Prostate gland (tissue), 2 donors: ENCODE measurements at regions of chr5 and their contacts with region 1.

Region 1: DNA sequence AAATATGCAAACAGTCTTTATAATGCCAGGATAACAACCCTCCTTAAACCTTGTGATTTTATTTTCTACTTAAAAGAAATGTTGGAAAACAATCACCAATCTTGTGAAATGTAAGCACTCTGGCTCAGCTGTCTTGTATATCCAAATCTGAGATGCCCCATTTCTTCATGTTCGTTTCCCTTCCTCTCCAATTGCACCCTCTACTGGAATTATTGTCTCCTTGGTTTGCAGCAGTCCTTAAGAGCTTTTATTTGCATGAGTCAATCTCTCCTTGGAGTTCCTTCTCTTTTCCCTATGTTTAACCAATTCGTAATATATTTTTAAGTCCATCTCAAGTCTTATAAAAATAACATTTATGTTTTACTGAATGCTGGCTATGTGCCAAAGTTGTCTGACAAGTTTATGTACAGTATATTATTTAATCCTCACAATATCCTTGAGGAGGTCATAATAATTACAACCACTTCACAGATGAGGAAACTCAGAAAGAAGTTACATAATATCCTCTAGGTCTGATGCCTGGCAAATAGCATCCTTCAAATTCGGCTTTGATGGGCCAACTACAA is 362.0 kb upstream of the CDH10 start:
- DNase-seq: no peak
- H3K4me3 ChIP-seq: no peak overlapping the region
- H3K27ac ChIP-seq: no peak overlapping the region
- H3K4me1 ChIP-seq: no peaks in the 10 kb centered on the region
- H3K27me3 ChIP-seq: no peaks in the 10 kb centered on the region
- CTCF ChIP-seq: no peak
- POLR2A ChIP-seq: no peak

Region 2: DNA sequence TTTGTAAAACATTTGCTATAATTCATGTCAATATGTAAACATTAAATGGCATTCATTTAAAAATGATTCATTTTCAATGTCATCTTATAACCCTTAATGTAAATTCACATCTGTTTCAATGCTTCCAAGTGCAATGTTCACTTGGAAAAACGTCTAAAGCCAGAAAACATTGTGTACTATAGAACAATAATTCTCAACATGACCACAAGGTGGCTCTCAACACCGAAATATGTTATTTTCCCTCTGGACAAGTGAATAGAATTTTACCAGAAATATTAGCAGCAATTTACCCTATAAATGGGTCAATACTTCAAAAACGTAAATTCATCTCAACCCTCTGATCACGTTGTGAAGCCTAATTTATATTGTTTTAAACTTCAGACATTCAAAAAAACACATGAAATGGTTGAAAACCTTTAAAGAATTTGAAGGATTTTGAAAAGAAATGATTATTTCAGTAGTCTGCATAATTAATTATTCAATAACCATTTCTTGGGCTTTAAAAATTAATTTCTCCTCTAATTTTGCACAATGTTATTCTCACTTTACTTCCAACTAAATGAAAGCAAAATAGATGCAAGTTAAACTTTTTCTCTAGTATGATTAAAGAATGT is 373.0 kb before region 1 on chr5:
- intact Hi-C with region 1: loop called (anchors 10 kb)
- DNase-seq: no peak
- H3K4me3 ChIP-seq: no peak overlapping the region
- H3K27ac ChIP-seq: no peak overlapping the region
- H3K4me1 ChIP-seq: no peaks in the 10 kb centered on the region
- H3K27me3 ChIP-seq: no peaks in the 10 kb centered on the region
- CTCF ChIP-seq: peak in 3 of 4 experiments; percentile 51 to 62 (median 61)
- POLR2A ChIP-seq: no peak

Region 3: GRCh38 chr5:25064306-25064705 is 57.5 kb after region 1 on chr5:
- intact Hi-C with region 1: no loop called
- DNase-seq: no peak
- H3K4me3 ChIP-seq: no peak overlapping the region
- H3K27ac ChIP-seq: no peak overlapping the region
- H3K4me1 ChIP-seq: no peaks in the 10 kb centered on the region
- H3K27me3 ChIP-seq: no peaks in the 10 kb centered on the region
- CTCF ChIP-seq: no peak
- POLR2A ChIP-seq: no peak

Region 4: DNA sequence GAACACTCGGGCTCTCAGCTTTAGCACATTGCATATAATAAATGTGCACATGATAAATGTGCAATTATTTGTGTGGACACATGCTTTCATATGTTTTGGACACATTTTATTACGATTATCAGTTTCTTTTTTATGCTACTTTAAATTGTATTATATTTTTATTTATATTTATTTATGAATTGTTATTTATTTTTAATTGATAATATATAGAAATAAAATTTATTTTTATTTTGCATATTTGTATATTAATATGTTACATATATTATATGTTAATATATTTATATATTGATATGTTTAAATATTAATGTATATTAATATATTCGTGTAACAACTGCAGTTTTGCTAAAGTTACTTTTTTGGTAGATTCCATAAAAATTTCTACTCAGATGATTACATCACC is 92.7 kb after region 1 on chr5:
- intact Hi-C with region 1: no loop called
- DNase-seq: no peak
- H3K4me3 ChIP-seq: no peak overlapping the region
- H3K27ac ChIP-seq: no peak overlapping the region
- H3K4me1 ChIP-seq: no peaks in the 10 kb centered on the region
- H3K27me3 ChIP-seq: no peaks in the 10 kb centered on the region
- CTCF ChIP-seq: no peak
- POLR2A ChIP-seq: no peak